MCF 10A (cell line): ENCODE measurements at regions of chr18 and their contacts with region 1.

Region 1: GRCh38 chr18:48777026-48777743 is 173.6 kb downstream of the SMAD7 start:
- DNase-seq: peak; percentile 59
- H3K4me3 Mint-ChIP-seq: no peak overlapping the region
- H3K27ac Mint-ChIP-seq: no peak overlapping the region
- H3K4me1 Mint-ChIP-seq: peaks cover 4% of the 10 kb centered on the region
- H3K27me3 Mint-ChIP-seq: no peaks in the 10 kb centered on the region
- CTCF ChIP-seq: peak; percentile 84

Region 2: DNA sequence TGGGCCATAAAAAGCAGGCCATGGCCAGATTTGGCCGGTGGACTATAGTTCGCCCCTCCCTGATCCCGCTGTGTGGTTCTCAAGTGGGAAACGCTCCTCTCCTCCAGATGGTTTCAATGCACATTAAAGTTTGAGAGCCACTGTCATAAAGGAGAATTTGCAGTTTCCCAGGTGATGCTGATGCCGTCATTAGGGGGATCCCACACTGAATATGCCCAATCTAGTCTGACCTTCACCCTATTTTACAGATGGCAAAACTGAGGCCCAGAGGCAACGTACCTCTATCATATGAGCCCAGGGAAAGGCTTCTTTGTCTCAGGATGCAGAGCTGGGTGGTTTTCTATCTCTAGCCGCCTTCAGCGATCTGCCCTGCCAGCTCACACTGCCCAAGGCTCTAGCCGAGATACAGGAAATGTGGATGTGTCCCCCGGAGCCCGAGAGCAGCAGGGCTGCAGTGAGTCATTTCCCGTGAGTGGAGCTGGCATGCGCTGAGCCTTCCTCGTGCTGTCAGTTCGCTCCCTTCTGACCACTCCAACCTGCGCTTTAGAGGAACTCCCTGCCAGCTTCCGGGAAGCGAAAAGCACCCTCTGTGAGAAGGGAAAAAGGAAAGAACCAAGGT is 57.3 kb after region 1 on chr18:
- CTCF ChIA-PET with region 1: interaction called, 3 read pairs
- POLR2A ChIA-PET with region 1: no interaction called
- intact Hi-C with region 1: loop called (anchors 5 kb)
- DNase-seq: peak; percentile 96
- H3K4me3 Mint-ChIP-seq: peak overlapping the region; percentile 67
- H3K27ac Mint-ChIP-seq: peak overlapping the region; percentile 85
- H3K4me1 Mint-ChIP-seq: peaks cover 57% of the 10 kb centered on the region
- H3K27me3 Mint-ChIP-seq: no peaks in the 10 kb centered on the region
- CTCF ChIP-seq: no peak

Region 3: DNA sequence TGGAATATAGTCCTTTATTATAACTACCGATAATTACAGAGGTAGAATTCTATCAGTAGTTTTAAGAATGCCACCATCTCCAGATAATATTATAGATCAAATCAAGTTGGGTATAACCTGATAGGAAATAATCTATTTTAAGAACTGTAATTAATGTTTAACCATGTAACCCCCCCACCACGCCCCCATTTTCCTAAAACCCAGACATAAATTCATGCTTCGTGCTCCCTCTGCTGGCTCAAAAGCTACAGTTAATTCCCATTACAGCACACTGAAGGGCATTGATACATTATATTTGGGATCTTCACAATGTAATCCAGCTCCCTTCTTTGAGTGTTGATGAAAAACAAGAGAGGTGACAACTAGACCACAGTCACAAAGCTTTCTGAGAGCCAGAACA is 401.6 kb after region 1 on chr18:
- CTCF ChIA-PET with region 1: interaction called, 4 read pairs
- POLR2A ChIA-PET with region 1: interaction called, 3 read pairs
- intact Hi-C with region 1: loop called (anchors 2 kb)
- DNase-seq: peak; percentile 30
- H3K4me3 Mint-ChIP-seq: no peak overlapping the region
- H3K27ac Mint-ChIP-seq: no peak overlapping the region
- H3K4me1 Mint-ChIP-seq: peaks cover 12% of the 10 kb centered on the region
- H3K27me3 Mint-ChIP-seq: no peaks in the 10 kb centered on the region
- CTCF ChIP-seq: peak; percentile 62

Region 4: GRCh38 chr18:49238433-49239042 is 461.4 kb after region 1 on chr18:
- CTCF ChIA-PET with region 1: no interaction called
- POLR2A ChIA-PET with region 1: no interaction called
- intact Hi-C with region 1: loop called (anchors 2 kb)
- DNase-seq: peak; percentile 48
- H3K4me3 Mint-ChIP-seq: no peak overlapping the region
- H3K27ac Mint-ChIP-seq: no peak overlapping the region
- H3K4me1 Mint-ChIP-seq: no peaks in the 10 kb centered on the region
- H3K27me3 Mint-ChIP-seq: no peaks in the 10 kb centered on the region
- CTCF ChIP-seq: peak; percentile 51